Astrocyte of the spinal cord (primary cell): ENCODE measurements at regions of chr1 and their contacts with region 1.

Region 1: GRCh38 chr1:94541175-94542087 is at the start of gene F3:
- DNase-seq: peak; percentile 88
- H3K4me3 ChIP-seq: peak within 1 kb of the TSS; percentile 67
- CTCF ChIP-seq: no peak

Region 2: GRCh38 chr1:94237291-94238226 is 303.9 kb before region 1 on chr1 and contains the start of gene ARHGAP29:
- in situ Hi-C with region 1: no loop called
- DNase-seq: peak; percentile 78
- H3K4me3 ChIP-seq: peak within 1 kb of the TSS; percentile 96
- CTCF ChIP-seq: no peak

Region 3: DNA sequence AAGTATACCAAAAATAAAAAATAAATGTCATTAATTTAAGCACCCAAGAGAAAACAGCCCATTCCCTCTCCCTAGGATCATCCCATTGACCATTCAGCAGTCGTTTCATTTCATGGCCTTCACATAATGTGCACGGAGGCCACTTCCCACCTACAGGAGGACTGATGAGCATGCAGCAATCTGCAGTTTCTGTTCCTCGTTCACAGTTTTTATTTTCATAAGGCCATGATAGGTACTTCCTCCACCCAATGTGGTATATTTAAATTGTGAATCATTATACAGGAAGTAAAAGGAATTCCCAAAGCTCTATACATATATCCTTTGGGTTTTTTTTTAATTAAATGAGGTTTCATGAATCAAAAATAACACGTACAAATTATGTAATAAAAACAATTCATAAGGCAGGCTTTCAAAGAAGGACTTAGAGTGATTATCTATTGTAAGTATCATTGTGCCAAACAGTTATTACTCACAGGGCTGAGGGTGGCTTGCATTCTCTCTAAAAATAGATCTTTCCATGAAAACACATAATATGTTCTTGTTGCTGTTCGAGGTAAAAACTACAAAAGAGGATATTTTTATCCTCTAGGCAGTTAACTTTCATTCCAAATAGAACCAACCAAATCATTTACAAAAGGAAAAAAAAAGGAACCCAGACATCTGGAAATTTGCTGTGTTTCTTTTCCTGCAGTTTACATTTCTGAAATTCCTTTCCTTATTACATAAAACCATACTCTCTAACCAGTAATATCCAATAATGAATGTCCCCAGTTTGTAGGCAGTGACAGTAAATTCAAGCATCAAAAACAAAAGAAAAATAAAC is 251.3 kb after region 1 on chr1:
- in situ Hi-C with region 1: loop called (anchors 25 kb)
- DNase-seq: peak; percentile 90
- H3K4me3 ChIP-seq: no peak overlapping the region
- CTCF ChIP-seq: peak; percentile 48